Mammary epithelial cell (primary cell): ENCODE measurements at regions of chr10 and their contacts with region 1.

Region 1: DNA sequence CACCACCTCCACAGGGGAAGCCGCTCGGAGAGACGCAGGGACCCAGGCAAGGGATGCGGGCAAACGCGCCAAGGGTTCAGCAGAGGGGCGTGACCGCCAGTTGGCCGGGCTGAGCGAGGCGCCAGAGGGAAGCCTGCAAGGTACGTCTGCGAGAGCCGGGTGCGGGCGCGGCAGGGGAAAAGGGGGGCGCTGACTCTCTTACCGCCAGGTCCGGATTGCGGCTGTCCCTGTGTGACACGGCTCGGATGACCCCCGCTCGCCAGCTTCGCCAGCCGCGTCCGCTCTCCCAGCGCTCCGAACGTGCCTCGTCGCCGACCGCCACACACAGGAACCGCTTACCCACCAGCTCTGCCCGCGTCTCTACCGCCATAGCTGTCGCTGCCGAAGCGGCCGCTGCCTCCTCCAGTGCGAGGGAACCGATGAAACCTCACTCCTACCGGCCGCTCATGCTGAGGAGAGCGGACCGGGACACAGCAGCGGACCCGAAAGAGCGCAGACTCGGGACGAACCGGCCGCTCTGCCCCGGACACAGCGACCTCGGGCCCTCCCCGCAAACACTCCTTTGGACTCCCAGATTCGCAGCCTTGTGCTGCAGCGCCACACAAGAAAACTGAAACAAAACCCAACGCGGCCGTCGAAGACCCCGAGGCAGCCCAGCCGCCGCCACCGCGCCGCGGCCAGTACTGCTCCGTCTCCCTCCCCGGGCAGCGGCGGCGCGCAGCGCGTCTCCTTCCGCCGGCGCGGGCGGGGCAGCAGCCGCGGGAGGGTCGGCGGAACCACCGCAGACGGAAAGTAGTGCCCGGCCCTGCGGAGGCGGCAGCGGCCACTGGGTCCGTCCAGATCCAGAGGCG is at the start of gene JMJD1C:
- DNase-seq: peak; percentile 83
- H3K4me3 ChIP-seq: peak within 1 kb of the TSS; percentile 88 to 97 (median 92)
- H3K27ac ChIP-seq: peak within 1 kb of the TSS; percentile 88
- H3K4me1 ChIP-seq: peaks cover 4% of the 10 kb centered on the region
- H3K27me3 ChIP-seq: no peaks in the 10 kb centered on the region
- CTCF ChIP-seq: peak in 1 of 2 donors; percentile 1
- total RNA-seq, gene JMJD1C: 57.7 to 80.4 TPM

Region 2: GRCh38 chr10:62467527-62467926 is 998.0 kb before region 1 on chr10:
- CTCF ChIA-PET with region 1: no interaction called
- dilution Hi-C with region 1: no loop called
- in situ Hi-C with region 1: no loop called
- intact Hi-C with region 1: no loop called
- DNase-seq: peak; percentile 37
- H3K4me3 ChIP-seq: no peak overlapping the region
- H3K27ac ChIP-seq: no peak overlapping the region
- H3K4me1 ChIP-seq: no peaks in the 10 kb centered on the region
- H3K27me3 ChIP-seq: no peaks in the 10 kb centered on the region
- CTCF ChIP-seq: no peak

Region 3: DNA sequence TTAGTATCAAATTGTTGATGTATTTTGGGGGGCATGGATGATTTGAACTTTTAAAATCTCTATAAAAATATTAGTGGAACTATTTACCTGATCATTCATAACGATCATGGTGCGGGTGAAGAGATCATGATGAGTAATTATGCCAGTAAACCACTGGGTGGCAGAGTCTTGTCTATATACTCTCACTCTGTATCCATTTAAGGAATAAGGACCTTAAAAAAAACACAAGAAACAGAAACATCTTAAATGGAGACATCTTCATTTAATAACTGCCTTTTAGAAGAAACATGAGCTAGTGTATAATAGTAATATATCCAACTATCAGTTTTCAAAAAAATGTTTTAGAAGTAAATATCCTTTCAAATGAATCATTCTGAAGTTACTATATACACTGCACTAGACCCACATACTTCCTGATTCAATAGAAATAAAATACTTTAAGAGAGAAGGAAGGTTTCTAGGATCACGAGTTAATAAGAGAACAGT is 248.4 kb before region 1 on chr10:
- CTCF ChIA-PET with region 1: no interaction called
- dilution Hi-C with region 1: no loop called
- in situ Hi-C with region 1: no loop called
- intact Hi-C with region 1: loop called (anchors 2 kb)
- DNase-seq: peak; percentile 27
- H3K4me3 ChIP-seq: no peak overlapping the region
- H3K27ac ChIP-seq: no peak overlapping the region
- H3K4me1 ChIP-seq: no peaks in the 10 kb centered on the region
- H3K27me3 ChIP-seq: no peaks in the 10 kb centered on the region
- CTCF ChIP-seq: peak; percentile 59 to 64

Region 4: GRCh38 chr10:63441404-63441803 is 24.1 kb before region 1 on chr10:
- CTCF ChIA-PET with region 1: no interaction called
- dilution Hi-C with region 1: no loop called
- in situ Hi-C with region 1: no loop called
- intact Hi-C with region 1: no loop called
- DNase-seq: no peak
- H3K4me3 ChIP-seq: no peak overlapping the region
- H3K27ac ChIP-seq: no peak overlapping the region
- H3K4me1 ChIP-seq: peaks cover 8% of the 10 kb centered on the region
- H3K27me3 ChIP-seq: no peaks in the 10 kb centered on the region
- CTCF ChIP-seq: no peak

Region 5: GRCh38 chr10:63504125-63504880 is 38.8 kb after region 1 on chr10:
- CTCF ChIA-PET with region 1: no interaction called
- dilution Hi-C with region 1: no loop called
- in situ Hi-C with region 1: no loop called
- intact Hi-C with region 1: loop called (anchors 5 kb)
- DNase-seq: peak; percentile 90
- H3K4me3 ChIP-seq: no peak overlapping the region
- H3K27ac ChIP-seq: peak overlapping the region; percentile 32
- H3K4me1 ChIP-seq: peaks cover 18% of the 10 kb centered on the region
- H3K27me3 ChIP-seq: no peaks in the 10 kb centered on the region
- CTCF ChIP-seq: peak; percentile 3 to 19

Region 6: GRCh38 chr10:63521416-63522276 is 56.1 kb after region 1 on chr10:
- CTCF ChIA-PET with region 1: no interaction called
- dilution Hi-C with region 1: no loop called
- in situ Hi-C with region 1: no loop called
- intact Hi-C with region 1: loop called (anchors 1 kb)
- DNase-seq: peak; percentile 66
- H3K4me3 ChIP-seq: peak overlapping the region; percentile 91 to 95 (median 92)
- H3K27ac ChIP-seq: peak overlapping the region; percentile 90
- H3K4me1 ChIP-seq: peaks cover 27% of the 10 kb centered on the region
- H3K27me3 ChIP-seq: no peaks in the 10 kb centered on the region
- CTCF ChIP-seq: no peak

Region 7: DNA sequence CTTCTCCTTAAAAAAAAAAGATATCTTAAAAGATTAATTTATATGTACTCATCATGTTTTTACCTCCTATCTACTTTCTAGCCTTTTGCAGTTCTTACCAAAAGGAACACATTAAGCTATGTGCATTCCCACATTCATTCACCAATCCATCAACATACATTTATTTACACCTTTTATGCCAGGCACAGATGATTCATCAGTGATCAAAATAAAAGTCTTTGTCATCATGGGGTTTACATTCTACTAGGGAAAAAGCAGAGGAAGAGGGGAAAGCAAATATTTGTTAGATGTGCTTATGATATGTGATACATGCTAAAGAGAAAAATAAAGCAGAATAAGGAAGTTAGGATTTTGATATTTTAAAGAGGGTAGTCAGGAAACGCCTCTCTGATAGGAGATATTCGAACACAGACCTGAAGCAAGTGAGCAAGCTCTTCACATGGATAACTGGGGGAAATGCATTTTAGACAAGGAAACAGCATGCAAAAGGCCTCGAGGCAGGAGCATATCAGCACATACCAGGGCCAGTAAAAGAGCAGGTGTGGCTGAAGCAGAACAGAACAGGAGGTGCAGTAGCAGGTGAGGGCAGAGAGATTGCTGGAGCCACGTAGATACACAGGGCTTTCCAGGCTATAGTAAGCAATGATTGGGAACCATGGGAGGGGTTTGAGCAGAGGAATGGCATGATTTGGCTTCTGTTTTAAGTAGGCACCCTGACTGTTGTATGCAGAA is 123.1 kb after region 1 on chr10:
- CTCF ChIA-PET with region 1: no interaction called
- dilution Hi-C with region 1: no loop called
- in situ Hi-C with region 1: no loop called
- intact Hi-C with region 1: no loop called
- DNase-seq: peak; percentile 25
- H3K4me3 ChIP-seq: no peak overlapping the region
- H3K27ac ChIP-seq: no peak overlapping the region
- H3K4me1 ChIP-seq: peaks cover 5% of the 10 kb centered on the region
- H3K27me3 ChIP-seq: no peaks in the 10 kb centered on the region
- CTCF ChIP-seq: no peak